Panc1 (cell line): ENCODE measurements at regions of chr2 and their contacts with region 1.

Region 1: DNA sequence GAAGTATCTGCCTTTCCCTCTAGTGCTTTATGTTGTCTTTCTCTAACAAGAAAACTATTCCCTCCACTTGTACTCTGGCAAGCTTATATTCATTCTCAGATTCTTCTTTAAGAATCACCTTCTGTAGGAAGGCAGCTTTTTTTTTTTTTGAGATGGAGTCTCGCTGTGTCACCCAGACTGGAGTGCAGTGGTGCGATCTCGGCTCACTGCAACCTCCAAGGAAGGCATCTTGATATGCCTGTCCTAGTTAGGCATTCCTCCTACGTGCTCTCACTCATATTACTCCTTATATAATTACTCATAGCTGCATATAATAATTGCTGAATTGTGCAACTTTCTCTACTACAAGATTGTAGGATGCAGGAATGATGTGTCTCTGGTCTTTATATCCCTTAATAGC is 15.8 kb downstream of the NDUFS1 start:
- DNase-seq: no peak
- ATAC-seq: no peak
- H3K4me3 ChIP-seq: no peak overlapping the region
- H3K27ac ChIP-seq: no peak overlapping the region
- H3K4me1 ChIP-seq: no peaks in the 10 kb centered on the region
- H3K27me3 ChIP-seq: no peaks in the 10 kb centered on the region
- CTCF ChIP-seq: no peak

Region 2: DNA sequence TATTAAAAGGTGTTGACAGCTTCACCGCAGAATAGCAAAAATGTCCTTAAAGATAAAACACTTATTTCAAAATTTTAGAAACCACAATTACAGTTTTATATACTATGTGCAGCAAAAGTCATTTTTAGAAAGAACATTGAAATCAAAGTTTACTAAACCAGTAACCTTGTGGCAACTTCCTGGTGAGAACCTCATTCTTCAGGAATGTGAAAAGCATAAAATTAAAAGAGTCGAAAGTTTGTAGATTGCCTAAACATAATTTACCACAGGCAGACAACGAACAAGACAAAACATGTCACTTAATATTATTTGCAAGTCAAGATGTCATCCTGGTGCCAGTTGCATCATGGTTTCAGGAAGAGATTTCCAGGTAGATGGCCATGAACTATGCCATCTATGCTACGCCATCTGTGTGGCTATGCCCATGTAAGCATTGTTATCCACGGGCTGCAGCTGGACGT is 569.4 kb before region 1 on chr2:
- CTCF ChIA-PET with region 1: no interaction called
- POLR2A ChIA-PET with region 1: no interaction called
- in situ Hi-C with region 1: no loop called
- intact Hi-C with region 1: no loop called
- DNase-seq: no peak
- ATAC-seq: no peak
- H3K4me3 ChIP-seq: no peak overlapping the region
- H3K27ac ChIP-seq: no peak overlapping the region
- H3K4me1 ChIP-seq: no peaks in the 10 kb centered on the region
- H3K27me3 ChIP-seq: no peaks in the 10 kb centered on the region; the same call in 1 of the 2 replicates
- CTCF ChIP-seq: no peak

Region 3: GRCh38 chr2:205763708-205764211 is 379.7 kb before region 1 on chr2:
- CTCF ChIA-PET with region 1: no interaction called
- POLR2A ChIA-PET with region 1: no interaction called
- in situ Hi-C with region 1: no loop called
- intact Hi-C with region 1: no loop called
- DNase-seq: no peak
- ATAC-seq: peak; percentile 49; the same call in 1 of the 2 replicates
- H3K4me3 ChIP-seq: no peak overlapping the region
- H3K27ac ChIP-seq: no peak overlapping the region
- H3K4me1 ChIP-seq: no peaks in the 10 kb centered on the region
- H3K27me3 ChIP-seq: peaks cover 2% of the 10 kb centered on the region; the same call in 1 of the 2 replicates
- CTCF ChIP-seq: peak; percentile 75

Region 4: DNA sequence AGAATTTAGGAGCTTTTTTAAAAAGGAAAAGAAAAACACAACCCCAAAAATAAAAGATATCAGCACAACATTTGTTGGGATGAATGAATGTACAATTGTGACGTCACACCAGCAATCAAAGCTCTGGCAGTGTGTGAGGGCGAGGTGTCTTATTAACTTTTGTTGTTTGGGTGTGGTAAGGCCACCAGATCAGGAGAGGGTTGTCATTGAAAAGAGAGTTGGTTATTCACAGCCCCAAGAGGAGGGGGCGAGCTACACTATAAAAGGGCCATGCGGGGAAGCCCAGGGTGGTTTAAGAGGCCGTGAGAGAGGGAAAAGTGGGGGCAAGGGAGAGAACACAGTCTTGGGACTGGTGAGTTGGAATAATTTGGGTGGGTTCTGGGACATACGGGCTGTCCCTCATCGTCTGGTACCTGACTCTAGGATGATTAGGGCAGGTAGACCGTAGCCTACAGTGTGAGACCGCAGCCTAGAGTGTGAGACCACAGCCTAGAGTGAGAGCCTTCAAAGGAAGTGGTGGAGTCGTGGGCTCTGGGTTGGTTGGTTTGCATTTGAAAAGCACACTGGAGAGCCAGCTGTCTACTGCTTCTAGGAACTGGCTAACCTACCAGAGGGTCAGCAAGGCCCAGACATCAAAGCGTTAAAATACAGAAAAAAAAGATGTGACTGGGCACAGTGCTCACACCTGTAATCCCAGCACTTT is 185.8 kb before region 1 on chr2:
- CTCF ChIA-PET with region 1: no interaction called
- POLR2A ChIA-PET with region 1: no interaction called
- in situ Hi-C with region 1: no loop called
- intact Hi-C with region 1: no loop called
- DNase-seq: no peak
- ATAC-seq: no peak
- H3K4me3 ChIP-seq: no peak overlapping the region
- H3K27ac ChIP-seq: no peak overlapping the region
- H3K4me1 ChIP-seq: no peaks in the 10 kb centered on the region
- H3K27me3 ChIP-seq: no peaks in the 10 kb centered on the region
- CTCF ChIP-seq: no peak

Region 5: DNA sequence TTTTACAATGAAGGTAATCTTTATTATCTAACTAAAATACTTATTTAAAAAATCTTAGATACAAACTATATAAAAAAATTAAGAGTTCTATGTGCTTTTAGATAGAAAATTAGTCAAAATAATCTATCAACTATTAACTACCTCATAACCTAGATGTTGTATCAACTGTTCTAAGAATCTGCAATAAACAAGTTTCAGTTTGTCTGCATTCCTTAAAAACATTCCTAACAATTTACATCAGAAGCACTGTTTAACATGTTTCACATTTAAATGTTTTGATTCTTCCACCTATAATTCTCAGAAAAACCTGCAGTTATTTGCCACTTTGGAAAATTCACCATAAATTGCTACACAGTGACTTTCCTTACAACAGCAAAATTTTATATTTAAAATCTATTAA is 17.5 kb before region 1 on chr2:
- CTCF ChIA-PET with region 1: no interaction called
- POLR2A ChIA-PET with region 1: interaction called, 12 read pairs
- in situ Hi-C with region 1: no loop called
- intact Hi-C with region 1: no loop called
- DNase-seq: no peak
- ATAC-seq: no peak
- H3K4me3 ChIP-seq: no peak overlapping the region
- H3K27ac ChIP-seq: no peak overlapping the region
- H3K4me1 ChIP-seq: no peaks in the 10 kb centered on the region
- H3K27me3 ChIP-seq: no peaks in the 10 kb centered on the region
- CTCF ChIP-seq: no peak